Activated CD8-positive, alpha-beta memory T cell treated with anti-CD3 and anti-CD28 coated beads, Interleukin-2, amount 10 ng/mL, durations not matched to agents 7 days and 5 days (primary cell): ENCODE measurements at regions of chr11 and their contacts with region 1.

Region 1: GRCh38 chr11:133927690-133928627 is 28.8 kb downstream of the IGSF9B start:
- DNase-seq: peak; percentile 80
- ATAC-seq: peak; percentile 70
- H3K4me3 Mint-ChIP-seq: peak overlapping the region; percentile 53
- H3K27ac Mint-ChIP-seq: peak overlapping the region; percentile 78
- H3K4me1 Mint-ChIP-seq: peaks cover 32% of the 10 kb centered on the region
- H3K27me3 Mint-ChIP-seq: no peaks in the 10 kb centered on the region

Region 2: GRCh38 chr11:133916784-133917440 is 11.0 kb before region 1 on chr11:
- CTCF ChIA-PET with region 1: interaction called, 14 read pairs
- DNase-seq: no peak
- ATAC-seq: no peak
- H3K4me3 Mint-ChIP-seq: no peak overlapping the region
- H3K27ac Mint-ChIP-seq: no peak overlapping the region
- H3K4me1 Mint-ChIP-seq: no peaks in the 10 kb centered on the region
- H3K27me3 Mint-ChIP-seq: no peaks in the 10 kb centered on the region

Region 3: GRCh38 chr11:133947321-133947756 is 19.4 kb after region 1 on chr11:
- CTCF ChIA-PET with region 1: interaction called, 63 read pairs
- DNase-seq: peak; percentile 83
- ATAC-seq: peak; percentile 58
- H3K4me3 Mint-ChIP-seq: peak overlapping the region; percentile 56
- H3K27ac Mint-ChIP-seq: peak overlapping the region; percentile 74
- H3K4me1 Mint-ChIP-seq: peaks cover 72% of the 10 kb centered on the region
- H3K27me3 Mint-ChIP-seq: no peaks in the 10 kb centered on the region

Region 4: DNA sequence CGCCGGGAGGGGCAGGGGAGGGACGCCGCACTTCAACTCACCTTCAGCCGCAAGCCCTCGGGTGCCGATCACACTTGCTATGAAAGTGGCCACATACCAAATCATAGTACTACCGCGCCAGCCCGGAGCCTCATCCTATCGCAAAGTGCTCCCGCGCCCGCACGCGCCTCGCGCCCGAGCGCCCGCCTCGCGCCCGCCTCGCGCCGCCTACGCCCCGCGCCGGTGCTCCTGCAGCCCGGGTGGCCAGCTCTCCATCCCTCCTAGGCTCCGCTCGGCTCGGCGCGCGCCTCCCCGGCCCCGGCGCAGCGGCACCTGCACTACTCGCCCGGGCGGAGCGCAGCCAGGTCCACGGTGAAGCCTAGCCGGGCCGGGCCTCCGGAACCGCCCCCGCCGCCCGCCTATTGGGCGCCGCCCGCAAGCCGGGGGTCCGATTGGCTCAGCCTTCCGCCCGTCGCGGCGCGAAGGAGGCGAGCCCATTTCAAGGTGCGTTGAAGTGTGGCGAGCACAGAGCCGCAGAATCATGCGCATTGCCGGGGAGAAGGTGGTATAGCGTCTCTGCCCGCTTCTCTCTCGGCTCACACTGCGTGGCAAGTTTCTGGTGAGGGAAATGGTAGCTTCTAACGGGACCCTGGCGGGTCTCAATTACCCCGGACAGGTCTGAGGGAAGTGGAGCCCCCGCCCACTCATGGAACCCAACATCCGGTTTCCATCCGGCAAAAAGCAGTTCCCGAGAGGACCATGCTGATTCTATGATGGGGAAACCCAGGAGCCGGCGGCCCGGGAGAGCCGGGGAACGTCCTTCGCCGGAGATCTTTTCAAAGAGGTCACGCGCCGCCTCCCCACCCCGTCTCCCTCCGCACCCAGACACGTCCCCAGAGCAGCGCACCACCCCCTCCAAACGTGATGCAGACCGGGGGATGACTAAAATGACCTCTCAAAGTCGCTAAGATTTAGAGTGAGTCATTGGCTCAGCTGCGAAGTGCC is 29.0 kb after region 1 on chr11 and contains the start of gene IGSF9B:
- CTCF ChIA-PET with region 1: interaction called, 21 read pairs
- DNase-seq: peak; percentile 91
- ATAC-seq: peak; percentile 98
- H3K4me3 Mint-ChIP-seq: peak within 1 kb of the TSS; percentile 86
- H3K27ac Mint-ChIP-seq: peak within 1 kb of the TSS; percentile 72
- H3K4me1 Mint-ChIP-seq: peaks cover 47% of the 10 kb centered on the region
- H3K27me3 Mint-ChIP-seq: peaks cover 46% of the 10 kb centered on the region
- total RNA-seq, gene IGSF9B: 19.6 to 34.5 TPM

Region 5: DNA sequence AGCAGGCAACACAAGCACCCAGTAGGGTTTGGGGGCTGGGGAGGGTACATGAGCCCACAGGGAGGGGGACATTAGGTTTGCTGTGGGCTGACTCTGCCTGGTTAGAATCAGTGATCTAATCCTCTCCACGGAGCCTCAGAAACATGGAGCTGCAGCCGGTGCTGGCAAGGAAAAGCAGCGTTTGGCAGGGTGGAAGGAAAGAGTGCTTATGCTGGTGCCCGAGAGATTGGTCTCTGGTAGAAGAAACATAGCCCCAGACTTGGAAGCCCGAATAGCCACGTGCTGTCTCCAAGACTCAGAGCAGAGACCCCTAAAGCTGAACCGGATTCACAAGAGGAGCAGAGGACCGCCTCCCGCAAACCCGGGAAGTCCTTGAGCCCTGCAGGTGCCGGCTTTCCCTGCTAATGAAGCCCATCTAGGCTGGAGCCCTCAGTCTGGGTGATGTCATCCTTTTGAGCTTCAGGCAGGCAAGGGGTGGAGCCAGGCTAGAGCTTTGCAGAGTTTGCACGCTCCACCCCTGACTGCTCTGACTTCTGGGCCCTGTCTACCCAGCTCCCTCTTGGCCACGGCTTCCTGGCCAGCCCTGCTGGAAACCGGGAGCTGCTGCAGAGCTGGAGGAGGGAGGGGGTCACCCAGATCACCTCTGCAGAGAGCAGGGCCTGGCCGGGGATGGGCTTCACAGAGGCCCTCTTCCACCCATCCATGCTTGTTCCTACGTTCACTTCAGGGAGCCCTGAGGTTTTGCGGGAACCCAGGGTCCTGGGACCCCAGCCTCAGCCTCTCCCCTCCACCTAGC is 105.9 kb after region 1 on chr11:
- CTCF ChIA-PET with region 1: interaction called, 20 read pairs
- DNase-seq: peak; percentile 85
- ATAC-seq: peak; percentile 90
- H3K4me3 Mint-ChIP-seq: peak overlapping the region; percentile 23
- H3K27ac Mint-ChIP-seq: peak overlapping the region; percentile 58
- H3K4me1 Mint-ChIP-seq: peaks cover 50% of the 10 kb centered on the region
- H3K27me3 Mint-ChIP-seq: peaks cover 5% of the 10 kb centered on the region

Region 6: GRCh38 chr11:134098566-134099184 is 170.7 kb after region 1 on chr11:
- CTCF ChIA-PET with region 1: interaction called, 10 read pairs
- DNase-seq: no peak
- ATAC-seq: peak; percentile 64
- H3K4me3 Mint-ChIP-seq: no peak overlapping the region
- H3K27ac Mint-ChIP-seq: no peak overlapping the region
- H3K4me1 Mint-ChIP-seq: no peaks in the 10 kb centered on the region
- H3K27me3 Mint-ChIP-seq: peaks cover 2% of the 10 kb centered on the region